ENCODE measurements at regions of chr13 and their contacts with region 1.

Region 1: DNA sequence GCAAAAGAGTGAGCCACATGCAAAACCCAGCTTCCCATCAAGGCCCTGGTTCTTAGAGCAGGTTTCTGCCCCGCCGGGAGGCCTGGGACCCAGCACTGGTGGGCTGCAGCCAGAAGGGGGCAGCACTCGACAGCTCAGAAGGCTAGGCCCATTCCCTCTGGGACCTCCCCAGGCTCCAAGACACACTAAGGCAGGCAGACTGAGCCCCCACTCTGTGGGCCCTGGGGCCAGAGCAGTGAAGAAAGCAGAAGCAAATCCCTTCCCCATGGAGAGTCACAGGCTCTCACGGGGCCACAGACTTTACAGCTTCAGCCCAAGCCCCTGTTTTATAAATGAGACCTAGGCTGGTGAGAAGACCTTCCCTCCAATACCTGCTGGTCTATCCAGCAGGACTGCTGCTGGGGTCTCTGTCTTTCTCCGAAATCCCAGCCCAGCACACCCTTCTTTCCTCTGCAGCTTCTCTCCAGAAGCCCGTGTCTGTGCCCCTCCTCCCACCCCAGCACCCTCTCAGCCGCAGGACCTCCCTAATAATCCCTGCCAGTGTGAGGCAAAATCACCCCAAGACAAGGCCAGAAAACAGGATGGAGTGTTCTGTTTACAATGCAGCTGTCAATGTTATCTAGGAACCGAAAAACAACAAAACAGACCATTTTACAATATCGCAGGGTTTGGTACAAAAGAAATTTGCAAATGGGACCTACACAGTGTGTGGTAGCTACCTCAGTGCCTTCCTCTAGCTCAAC is 109.3 kb downstream of the ABCC4 start:
- DNase-seq: peak; percentile 78
- H3K4me3 ChIP-seq: no peak overlapping the region
- H3K27ac ChIP-seq: no peak overlapping the region
- H3K4me1 ChIP-seq: no peaks in the 10 kb centered on the region
- H3K27me3 ChIP-seq: no peaks in the 10 kb centered on the region
- CTCF ChIP-seq: peak; percentile 90

Region 2: DNA sequence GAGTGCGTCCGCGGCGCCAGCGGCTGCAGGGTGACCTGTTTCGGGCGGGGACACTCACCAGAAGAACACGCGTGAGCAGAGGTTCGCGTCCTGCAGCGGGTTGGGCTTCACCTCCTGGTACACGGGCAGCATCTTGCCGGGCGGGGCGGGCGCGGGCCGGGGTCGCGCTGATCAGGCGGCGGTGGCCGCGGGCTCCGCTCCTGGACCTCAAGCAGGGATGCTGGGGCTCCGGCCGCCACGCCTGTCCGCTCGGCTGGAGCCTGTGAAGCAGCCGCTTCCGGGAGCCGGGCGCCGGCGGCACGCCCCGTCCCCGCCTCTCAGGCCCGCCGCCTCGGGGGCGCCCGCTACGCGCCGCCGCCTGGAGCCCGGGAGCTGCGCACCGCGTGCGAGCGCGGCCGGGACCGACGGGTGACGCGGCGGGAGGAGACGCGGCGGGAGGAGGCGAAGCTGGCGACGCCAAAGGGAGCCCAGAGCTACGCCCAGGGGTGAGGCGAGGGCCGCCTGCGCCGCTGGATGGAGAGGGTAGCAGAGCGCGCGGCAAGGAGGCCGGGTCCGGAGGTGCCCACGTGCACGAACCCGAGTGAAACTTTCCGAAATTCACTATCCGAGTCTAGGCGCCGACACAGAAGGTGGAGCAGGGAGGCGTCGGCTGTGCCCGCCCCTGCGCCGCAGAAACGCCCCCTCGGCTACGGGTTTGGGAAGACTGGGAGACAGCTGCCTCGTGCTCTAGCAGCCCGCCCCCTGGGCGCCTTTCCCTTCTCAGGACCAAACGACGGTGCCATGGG is 109.4 kb after region 1 on chr13 and contains the start of gene ABCC4:
- intact Hi-C with region 1: loop called (anchors 5 kb)
- DNase-seq: peak; percentile 73
- H3K4me3 ChIP-seq: peak within 1 kb of the TSS; percentile 65
- H3K27ac ChIP-seq: peak within 1 kb of the TSS; percentile 64
- H3K4me1 ChIP-seq: peaks cover 11% of the 10 kb centered on the region
- H3K27me3 ChIP-seq: no peaks in the 10 kb centered on the region
- CTCF ChIP-seq: no peak
- total RNA-seq, gene ABCC4: 11.4 to 14.7 TPM

Region 3: DNA sequence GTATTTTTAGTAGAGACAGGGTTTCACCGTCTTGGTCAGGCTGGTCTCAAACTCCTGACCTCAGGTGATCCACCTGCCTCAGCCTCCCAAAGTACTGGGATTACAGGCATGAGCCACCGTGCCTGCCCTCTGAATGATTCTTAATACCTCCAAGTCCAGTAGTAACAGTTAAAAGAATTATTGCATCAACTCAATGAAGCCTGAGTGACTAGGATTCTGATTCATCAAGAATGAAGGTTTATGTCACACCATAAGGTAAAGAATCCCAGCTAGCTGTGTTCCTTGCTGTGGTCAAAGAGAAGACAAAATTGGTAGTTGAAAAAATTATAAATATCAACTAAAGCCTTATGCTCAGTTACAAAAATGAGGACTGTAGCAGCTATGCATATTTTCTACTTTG is 190.4 kb after region 1 on chr13:
- intact Hi-C with region 1: loop called (anchors 2 kb)
- DNase-seq: no peak
- H3K4me3 ChIP-seq: no peak overlapping the region
- H3K27ac ChIP-seq: no peak overlapping the region
- H3K4me1 ChIP-seq: no peaks in the 10 kb centered on the region
- H3K27me3 ChIP-seq: no peaks in the 10 kb centered on the region
- CTCF ChIP-seq: no peak

Region 4: GRCh38 chr13:95403828-95404522 is 212.0 kb after region 1 on chr13:
- intact Hi-C with region 1: loop called (anchors 2 kb)
- DNase-seq: peak; percentile 83
- H3K4me3 ChIP-seq: peak overlapping the region; percentile 20
- H3K27ac ChIP-seq: no peak overlapping the region
- H3K4me1 ChIP-seq: no peaks in the 10 kb centered on the region
- H3K27me3 ChIP-seq: no peaks in the 10 kb centered on the region
- CTCF ChIP-seq: peak; percentile 87

Region 5: GRCh38 chr13:95479731-95480130 is 287.7 kb after region 1 on chr13:
- intact Hi-C with region 1: loop called (anchors 5 kb)
- DNase-seq: no peak
- H3K4me3 ChIP-seq: no peak overlapping the region
- H3K27ac ChIP-seq: no peak overlapping the region
- H3K4me1 ChIP-seq: no peaks in the 10 kb centered on the region
- H3K27me3 ChIP-seq: no peaks in the 10 kb centered on the region
- CTCF ChIP-seq: no peak

Measured in colonic mucosa (tissue), 4 donors.